Naive thymus-derived CD8-positive, alpha-beta T cell (primary cell): ENCODE measurements at regions of chr1 and their contacts with region 1.

Region 1: DNA sequence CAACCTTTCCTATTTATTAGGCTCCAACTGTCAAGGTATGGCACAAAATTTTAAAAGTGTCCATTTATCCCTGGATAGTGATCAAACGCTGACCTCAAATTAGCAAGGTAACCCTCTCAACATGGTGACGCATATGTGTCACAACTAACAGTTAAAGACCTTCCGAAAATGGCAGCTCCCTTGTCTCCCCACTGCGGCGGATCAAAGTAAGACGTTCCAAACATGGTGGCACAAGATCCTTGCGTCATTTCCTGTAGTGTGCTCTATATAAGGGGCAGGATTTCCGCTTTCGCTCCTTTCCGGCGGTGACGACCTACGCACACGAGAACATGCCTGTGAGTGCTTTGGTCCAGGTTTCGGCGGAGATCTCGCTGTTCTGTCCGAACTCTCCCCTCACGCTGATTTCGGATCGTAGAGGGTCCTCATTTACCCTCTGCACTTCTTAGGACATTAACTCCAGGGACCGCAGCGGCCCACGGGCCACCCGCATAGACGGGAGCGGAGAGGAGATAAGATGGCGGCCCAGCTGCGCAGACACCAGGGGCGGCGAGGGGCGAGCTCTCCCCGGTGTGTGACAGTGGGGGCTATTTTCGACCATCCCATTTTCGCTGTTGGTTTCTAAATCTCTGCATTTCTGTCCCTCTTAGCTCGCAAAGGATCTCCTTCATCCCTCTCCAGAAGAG is at the start of gene RPS27:
- DNase-seq: peak; percentile 59 to 97 (median 92)
- ATAC-seq: peak; percentile 82 to 86
- H3K4me3 Mint-ChIP-seq: peak within 1 kb of the TSS; percentile 90 to 100 (median 98)
- H3K27ac Mint-ChIP-seq: peak within 1 kb of the TSS; percentile 99 to 100 (median 100)
- H3K4me1 Mint-ChIP-seq: peaks cover 35 to 63% (median 58%) of the 10 kb centered on the region in 4 donors
- H3K27me3 Mint-ChIP-seq: peaks cover 0 to 2% (median 0%) of the 10 kb centered on the region in 5 donors
- polyA plus RNA-seq, gene RPS27: 23,491 to 26,660 (median 26,449) TPM

Region 2: DNA sequence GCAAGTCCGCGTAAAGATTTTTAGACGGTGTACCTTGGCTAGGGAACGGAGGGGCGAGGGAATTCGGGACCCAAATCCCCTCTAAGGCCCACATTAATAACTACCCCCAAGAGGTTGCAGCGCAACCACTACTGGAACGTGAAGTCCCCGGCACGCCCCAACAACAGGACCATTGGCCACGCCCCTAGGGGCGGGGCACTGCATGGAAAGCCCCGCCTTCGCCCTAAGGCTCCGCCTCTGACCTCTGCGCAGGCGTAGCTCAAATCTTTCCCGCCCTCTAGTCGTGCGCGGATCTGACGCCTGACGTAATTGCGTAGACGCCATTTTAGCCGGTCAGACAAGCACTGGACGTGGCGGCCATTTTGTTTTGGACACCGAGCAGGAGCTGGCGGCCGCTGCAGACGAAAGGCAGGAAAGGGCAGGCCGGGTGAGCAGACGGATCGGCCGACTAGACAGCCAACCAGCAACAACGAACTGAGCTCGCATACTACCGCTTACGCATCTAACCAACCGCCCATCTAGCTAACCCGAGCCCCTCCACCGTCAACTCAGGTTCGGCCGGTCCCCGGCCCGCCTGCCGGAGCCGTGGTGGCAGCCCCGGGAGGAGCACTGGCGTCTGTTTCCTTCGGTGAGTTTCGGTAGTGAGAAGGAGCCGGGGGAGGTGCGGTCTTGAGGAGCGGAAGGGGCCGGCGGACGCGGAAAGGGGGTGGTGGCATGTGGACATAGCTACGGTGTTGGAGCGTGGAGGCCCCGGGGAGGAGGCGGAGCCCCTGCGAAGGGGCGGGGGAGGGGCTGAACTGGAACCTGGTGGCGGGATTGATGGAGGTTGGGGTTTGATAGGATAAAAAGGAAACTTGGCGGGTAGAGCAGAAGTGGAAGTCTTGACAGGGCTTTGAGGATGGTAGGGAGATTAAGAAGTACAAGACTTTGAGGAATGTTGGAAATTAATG is 356.6 kb before region 1 on chr1 and contains the start of gene CHTOP:
- POLR2A ChIA-PET with region 1: interaction called, 12 read pairs
- DNase-seq: peak; percentile 87 to 99 (median 96)
- ATAC-seq: peak; percentile 87 to 89
- H3K4me3 Mint-ChIP-seq: peak within 1 kb of the TSS; percentile 94 to 100 (median 100)
- H3K27ac Mint-ChIP-seq: peak within 1 kb of the TSS; percentile 98 to 100 (median 100)
- H3K4me1 Mint-ChIP-seq: peaks cover 12 to 47% (median 39%) of the 10 kb centered on the region in 4 donors
- H3K27me3 Mint-ChIP-seq: no peaks in the 10 kb centered on the region
- polyA plus RNA-seq, gene CHTOP: 45.2 to 74.7 (median 48.8) TPM

Region 3: GRCh38 chr1:153783233-153784190 is 207.1 kb before region 1 on chr1:
- POLR2A ChIA-PET with region 1: interaction called, 40 read pairs
- DNase-seq: peak; percentile 85 to 96 (median 92)
- ATAC-seq: peak; percentile 94
- H3K4me3 Mint-ChIP-seq: peak overlapping the region; percentile 84 to 96 (median 94)
- H3K27ac Mint-ChIP-seq: peak overlapping the region; percentile 80 to 99 (median 98)
- H3K4me1 Mint-ChIP-seq: peaks cover 2 to 22% (median 11%) of the 10 kb centered on the region in 4 donors
- H3K27me3 Mint-ChIP-seq: no peaks in the 10 kb centered on the region

Region 4: GRCh38 chr1:153912349-153912748 is 78.3 kb before region 1 on chr1:
- POLR2A ChIA-PET with region 1: no interaction called
- DNase-seq: no peak
- ATAC-seq: no peak
- H3K4me3 Mint-ChIP-seq: peak overlapping the region in 4 of 10 donors; percentile 14 to 49 (median 40)
- H3K27ac Mint-ChIP-seq: peak overlapping the region in 8 of 10 donors; percentile 11 to 65 (median 28)
- H3K4me1 Mint-ChIP-seq: peaks cover 10 to 54% (median 43%) of the 10 kb centered on the region in 4 donors
- H3K27me3 Mint-ChIP-seq: no peaks in the 10 kb centered on the region

Region 5: GRCh38 chr1:153922972-153923925 is 67.4 kb before region 1 on chr1 and contains the start of gene GATAD2B:
- POLR2A ChIA-PET with region 1: interaction called, 19 read pairs
- DNase-seq: peak; percentile 94 to 100 (median 99)
- ATAC-seq: peak; percentile 92
- H3K4me3 Mint-ChIP-seq: peak within 1 kb of the TSS; percentile 80 to 97 (median 94)
- H3K27ac Mint-ChIP-seq: peak within 1 kb of the TSS; percentile 93 to 99 (median 97)
- H3K4me1 Mint-ChIP-seq: peaks cover 25 to 56% (median 45%) of the 10 kb centered on the region in 4 donors
- H3K27me3 Mint-ChIP-seq: peaks cover 0 to 3% (median 0%) of the 10 kb centered on the region in 5 donors
- polyA plus RNA-seq, gene GATAD2B: 4.4 to 5.3 (median 5.2) TPM

Region 6: GRCh38 chr1:153967082-153968000 is 23.3 kb before region 1 on chr1 and contains the start of gene CREB3L4:
- POLR2A ChIA-PET with region 1: interaction called, 52 read pairs
- DNase-seq: peak; percentile 68 to 93 (median 83)
- ATAC-seq: peak; percentile 88 to 91
- H3K4me3 Mint-ChIP-seq: peak within 1 kb of the TSS; percentile 87 to 97 (median 94)
- H3K27ac Mint-ChIP-seq: peak within 1 kb of the TSS; percentile 92 to 99 (median 95)
- H3K4me1 Mint-ChIP-seq: peaks cover 31 to 68% (median 64%) of the 10 kb centered on the region in 4 donors
- H3K27me3 Mint-ChIP-seq: no peaks in the 10 kb centered on the region
- polyA plus RNA-seq, gene CREB3L4: 4.3 to 6.0 (median 4.4) TPM

Region 7: GRCh38 chr1:154157520-154158306 is 167.1 kb after region 1 on chr1:
- POLR2A ChIA-PET with region 1: interaction called, 52 read pairs
- DNase-seq: peak; percentile 23 to 90 (median 76)
- ATAC-seq: peak; percentile 98
- H3K4me3 Mint-ChIP-seq: peak overlapping the region; percentile 54 to 85 (median 80)
- H3K27ac Mint-ChIP-seq: peak overlapping the region; percentile 93 to 98 (median 95)
- H3K4me1 Mint-ChIP-seq: peaks cover 39 to 73% (median 65%) of the 10 kb centered on the region in 4 donors
- H3K27me3 Mint-ChIP-seq: no peaks in the 10 kb centered on the region

Region 8: GRCh38 chr1:154272217-154272998 is 281.8 kb after region 1 on chr1 and contains the start of gene HAX1:
- POLR2A ChIA-PET with region 1: interaction called, 24 read pairs
- DNase-seq: peak; percentile 80 to 98 (median 96)
- ATAC-seq: peak; percentile 90 to 91
- H3K4me3 Mint-ChIP-seq: peak within 1 kb of the TSS; percentile 94 to 99 (median 96)
- H3K27ac Mint-ChIP-seq: peak within 1 kb of the TSS; percentile 97 to 99 (median 99)
- H3K4me1 Mint-ChIP-seq: peaks cover 12 to 40% (median 37%) of the 10 kb centered on the region in 4 donors
- H3K27me3 Mint-ChIP-seq: no peaks in the 10 kb centered on the region
- polyA plus RNA-seq, gene HAX1: 165 to 170 (median 169) TPM